ENCODE measurements at regions of chr2 and their contacts with region 1.

Region 1: DNA sequence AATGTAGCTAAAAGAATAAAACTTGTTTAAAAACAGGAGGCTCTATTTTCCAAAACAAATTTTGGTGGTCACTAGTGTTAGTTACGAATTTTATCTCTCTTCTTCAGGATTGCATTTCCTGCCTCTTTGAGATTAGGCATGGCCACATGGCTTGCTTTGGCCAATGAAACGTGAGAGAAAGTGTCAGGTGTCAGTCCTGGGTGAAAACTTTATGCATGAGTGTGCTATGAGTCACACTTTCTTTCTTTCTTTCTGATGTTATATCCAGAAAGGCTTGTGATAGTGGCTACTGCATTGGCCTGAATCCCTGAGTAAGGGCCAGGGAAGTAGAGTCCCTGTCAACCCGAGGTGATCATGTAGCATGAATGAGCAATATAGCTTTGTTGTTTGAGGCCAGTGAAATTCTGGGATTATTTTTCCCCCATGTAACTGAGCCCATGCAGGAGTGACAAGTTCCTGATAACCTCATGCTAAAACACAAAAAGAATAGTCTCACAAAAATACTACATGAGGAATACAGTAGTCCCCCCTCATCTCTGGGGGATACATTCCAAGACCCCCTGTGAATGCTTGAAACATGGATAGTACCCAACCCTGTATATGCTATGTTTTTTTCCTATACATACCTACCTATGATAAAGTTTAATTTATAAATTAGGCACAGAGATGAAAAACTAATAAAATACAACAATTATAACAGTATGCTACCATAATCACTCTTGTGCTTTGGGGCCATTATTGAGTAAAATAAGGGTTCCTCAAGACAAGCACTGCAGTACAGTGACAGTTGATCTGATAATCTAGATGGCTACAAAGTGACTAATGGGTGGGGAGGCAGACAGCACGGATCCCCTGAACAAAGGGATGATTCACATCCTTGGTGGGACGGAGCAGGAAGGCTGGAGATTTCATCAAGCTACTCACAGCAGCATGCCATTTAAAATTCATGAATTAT is 109.5 kb downstream of the CDC42EP3 start:
- DNase-seq: no peak
- ATAC-seq: peak; percentile 86
- H3K4me3 ChIP-seq: no peak overlapping the region
- H3K27ac ChIP-seq: peak overlapping the region; percentile 42; the same call in 1 of the 2 replicates
- H3K4me1 ChIP-seq: peaks cover 46% of the 10 kb centered on the region
- H3K27me3 ChIP-seq: no peaks in the 10 kb centered on the region
- CTCF ChIP-seq: no peak
- EP300 ChIP-seq: no peak
- POLR2A ChIP-seq: no peak
- RAD21 ChIP-seq: no peak

Region 2: GRCh38 chr2:36708041-36708741 is 853.7 kb before region 1 on chr2:
- CTCF ChIA-PET with region 1: no interaction called
- POLR2A ChIA-PET with region 1: no interaction called
- RAD21 ChIA-PET with region 1: no interaction called
- SMC1A ChIA-PET with region 1: no interaction called
- in situ Hi-C with region 1: no loop called
- intact Hi-C with region 1: no loop called
- DNase-seq: no peak
- ATAC-seq: no peak
- H3K4me3 ChIP-seq: no peak overlapping the region
- H3K27ac ChIP-seq: no peak overlapping the region
- H3K4me1 ChIP-seq: no peaks in the 10 kb centered on the region
- H3K27me3 ChIP-seq: no peaks in the 10 kb centered on the region
- CTCF ChIP-seq: no peak
- EP300 ChIP-seq: no peak
- POLR2A ChIP-seq: no peak
- RAD21 ChIP-seq: no peak

Region 3: DNA sequence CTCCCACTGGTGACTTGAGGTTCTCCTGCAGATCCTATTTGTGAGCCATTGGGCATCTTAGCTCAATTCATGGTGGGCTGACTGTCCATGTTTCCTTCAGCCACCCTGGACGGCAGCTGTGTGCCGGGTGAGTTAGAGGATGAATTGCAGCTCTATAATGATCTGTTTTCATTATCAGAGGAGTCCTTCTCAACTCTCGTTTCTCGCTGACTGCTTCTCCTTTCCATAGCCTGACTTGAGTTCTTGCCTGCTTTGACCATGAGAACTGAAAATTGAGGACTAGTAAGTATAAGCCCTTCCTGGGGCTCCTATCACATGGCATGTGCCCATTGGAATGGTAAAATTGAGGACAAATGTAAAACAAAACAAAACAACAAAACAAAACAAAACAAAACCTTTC is 12.3 kb before region 1 on chr2:
- CTCF ChIA-PET with region 1: interaction called, 14 read pairs
- POLR2A ChIA-PET with region 1: interaction called, 74 read pairs
- RAD21 ChIA-PET with region 1: interaction called, 44 read pairs
- SMC1A ChIA-PET with region 1: interaction called, 246 read pairs
- in situ Hi-C with region 1: no loop called
- intact Hi-C with region 1: no loop called
- DNase-seq: no peak
- ATAC-seq: peak; percentile 87
- H3K4me3 ChIP-seq: peak overlapping the region; percentile 4; the same call in 1 of the 2 replicates
- H3K27ac ChIP-seq: peak overlapping the region; percentile 95
- H3K4me1 ChIP-seq: peaks cover 36% of the 10 kb centered on the region
- H3K27me3 ChIP-seq: no peaks in the 10 kb centered on the region
- CTCF ChIP-seq: no peak
- EP300 ChIP-seq: no peak
- POLR2A ChIP-seq: no peak
- RAD21 ChIP-seq: no peak

Region 4: DNA sequence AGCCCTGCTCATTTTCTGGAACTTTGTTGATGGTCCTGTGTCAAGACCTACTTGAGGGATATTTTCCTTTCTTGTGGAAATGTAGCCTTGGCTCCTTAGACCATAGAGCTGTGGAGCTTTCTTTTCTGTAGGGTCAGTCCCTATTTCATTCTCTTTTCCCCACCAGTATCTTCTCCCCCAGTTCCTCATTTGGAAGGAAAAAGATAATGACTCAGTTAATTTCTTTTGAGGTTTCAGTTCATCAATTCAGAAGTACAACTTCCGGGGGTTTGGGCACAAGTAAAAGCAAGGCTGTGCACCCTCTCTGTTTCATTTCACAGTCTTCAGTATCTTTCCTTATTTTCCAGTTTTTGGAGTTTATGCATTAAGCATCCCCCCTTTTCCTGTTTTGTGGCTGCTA is 38.8 kb after region 1 on chr2:
- CTCF ChIA-PET with region 1: interaction called, 5 read pairs
- POLR2A ChIA-PET with region 1: no interaction called
- RAD21 ChIA-PET with region 1: no interaction called
- SMC1A ChIA-PET with region 1: interaction called, 13 read pairs
- in situ Hi-C with region 1: no loop called
- intact Hi-C with region 1: no loop called
- DNase-seq: no peak
- ATAC-seq: peak; percentile 91
- H3K4me3 ChIP-seq: peak overlapping the region; percentile 23; the same call in 1 of the 2 replicates
- H3K27ac ChIP-seq: peak overlapping the region; percentile 48; the same call in 1 of the 2 replicates
- H3K4me1 ChIP-seq: peaks cover 31% of the 10 kb centered on the region
- H3K27me3 ChIP-seq: no peaks in the 10 kb centered on the region
- CTCF ChIP-seq: no peak
- EP300 ChIP-seq: peak in 1 of 2 experiments; percentile 52; a peak in 1 of 4 replicates
- POLR2A ChIP-seq: no peak
- RAD21 ChIP-seq: no peak

Region 5: DNA sequence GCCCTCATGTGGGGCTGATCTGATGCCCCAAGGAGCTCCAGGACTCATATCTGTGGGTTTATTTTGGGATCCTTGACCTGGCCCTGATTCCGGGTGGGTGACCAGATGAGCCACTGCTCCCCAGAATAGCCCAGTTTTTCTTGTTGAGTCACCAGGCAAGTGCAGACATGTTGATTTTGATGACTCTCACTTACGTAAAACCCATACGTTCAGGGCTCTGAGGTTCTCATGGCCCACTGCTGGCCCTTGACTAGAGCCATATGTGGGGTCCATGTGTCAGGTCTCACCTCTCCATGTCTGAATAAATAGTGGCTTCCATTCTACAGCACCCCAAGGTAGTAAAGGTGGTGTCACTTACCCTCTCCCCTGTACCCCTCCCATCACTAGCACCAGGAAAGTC is 67.6 kb after region 1 on chr2:
- CTCF ChIA-PET with region 1: interaction called, 13 read pairs
- POLR2A ChIA-PET with region 1: interaction called, 28 read pairs
- RAD21 ChIA-PET with region 1: interaction called, 123 read pairs
- SMC1A ChIA-PET with region 1: interaction called, 102 read pairs
- in situ Hi-C with region 1: no loop called
- intact Hi-C with region 1: no loop called
- DNase-seq: no peak
- ATAC-seq: peak; percentile 32
- H3K4me3 ChIP-seq: no peak overlapping the region
- H3K27ac ChIP-seq: peak overlapping the region; percentile 76
- H3K4me1 ChIP-seq: peaks cover 47% of the 10 kb centered on the region
- H3K27me3 ChIP-seq: no peaks in the 10 kb centered on the region
- CTCF ChIP-seq: no peak
- EP300 ChIP-seq: peak; percentile 35 to 41; a peak in 1 of 4 replicates
- POLR2A ChIP-seq: no peak
- RAD21 ChIP-seq: no peak; the same call in 1 of the 2 replicates